Transverse colon (tissue), 4 donors: ENCODE measurements at regions of chr10 and their contacts with region 1.

Region 1: GRCh38 chr10:130110246-130111112 is at the start of gene C10orf143:
- DNase-seq: peak; percentile 98
- H3K4me3 ChIP-seq: peak within 1 kb of the TSS; percentile 67 to 77 (median 72)
- H3K27ac ChIP-seq: peak within 1 kb of the TSS; percentile 87 to 96 (median 94)
- H3K4me1 ChIP-seq: peaks cover 3 to 23% (median 18%) of the 10 kb centered on the region in 4 donors
- H3K27me3 ChIP-seq: no peaks in the 10 kb centered on the region
- CTCF ChIP-seq: no peak
- EP300 ChIP-seq: no peak
- POLR2A ChIP-seq: peak; percentile 92
- total RNA-seq, gene C10orf143: 3.8 to 4.0 TPM in 2 of 4 donors, not detected in the others

Region 2: DNA sequence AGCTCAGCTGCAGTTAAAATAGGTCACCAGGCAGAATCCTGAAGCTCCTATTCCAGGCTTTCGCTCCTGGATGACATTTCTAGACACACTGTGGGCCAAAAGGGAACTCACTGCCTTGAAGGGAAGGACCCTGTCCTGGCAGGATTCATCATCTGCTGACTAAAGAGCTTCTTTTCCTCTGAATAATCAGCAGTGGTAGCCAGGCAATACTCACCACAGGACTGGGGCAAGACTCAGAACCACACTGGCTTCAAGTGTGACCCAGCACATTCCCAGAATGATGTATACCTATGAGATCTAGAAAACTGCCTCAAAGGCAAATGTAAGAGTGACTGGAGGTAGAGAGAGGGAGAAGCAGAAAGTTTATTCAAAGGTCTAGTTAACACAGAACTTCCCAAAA is 116.9 kb before region 1 on chr10:
- in situ Hi-C with region 1: no loop called
- intact Hi-C with region 1: no loop called
- DNase-seq: no peak
- H3K4me3 ChIP-seq: no peak overlapping the region
- H3K27ac ChIP-seq: no peak overlapping the region
- H3K4me1 ChIP-seq: no peaks in the 10 kb centered on the region
- H3K27me3 ChIP-seq: no peaks in the 10 kb centered on the region
- CTCF ChIP-seq: no peak
- EP300 ChIP-seq: no peak
- POLR2A ChIP-seq: no peak

Region 3: DNA sequence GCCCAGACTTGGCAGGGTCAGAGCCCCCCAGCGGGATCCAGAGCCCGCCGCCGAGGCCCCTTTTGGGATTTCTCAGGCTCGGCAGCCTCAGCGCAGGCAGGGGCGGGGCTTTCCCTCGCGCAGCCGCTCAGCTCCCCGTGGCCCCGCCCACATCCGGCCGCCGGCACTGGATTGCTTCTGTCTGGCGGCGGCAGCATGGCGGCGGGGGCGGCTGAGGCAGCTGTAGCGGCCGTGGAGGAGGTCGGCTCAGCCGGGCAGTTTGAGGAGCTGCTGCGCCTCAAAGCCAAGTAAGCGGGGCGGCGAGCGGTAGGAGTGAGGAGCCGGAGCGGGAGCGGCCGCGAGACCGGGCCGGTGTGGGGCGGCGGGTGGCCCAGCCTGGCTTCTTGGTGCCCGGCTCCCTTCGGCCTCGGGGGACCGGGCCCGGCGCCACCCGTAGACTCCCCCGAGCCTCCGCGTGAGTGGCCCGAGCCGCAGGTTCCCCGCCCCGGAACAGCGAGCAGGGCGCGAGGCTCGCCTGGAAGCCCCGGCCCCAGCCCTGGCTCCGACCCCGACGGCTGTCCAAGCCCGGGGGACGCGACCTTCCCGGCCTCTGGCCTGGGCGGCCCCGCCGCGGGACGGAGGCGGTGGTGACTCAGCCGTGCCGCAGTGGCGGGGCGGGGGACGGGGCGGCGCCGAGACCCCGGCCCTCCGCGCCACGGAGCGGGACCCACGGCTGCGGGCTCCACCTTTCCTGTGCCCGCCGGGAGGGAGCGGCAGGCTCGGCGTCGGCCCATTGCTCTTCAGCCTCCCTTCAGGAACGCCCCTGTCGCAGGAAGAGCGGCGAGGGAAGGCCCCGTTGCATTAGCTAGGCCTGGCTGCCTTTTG is 26.0 kb after region 1 on chr10 and contains the start of gene GLRX3:
- in situ Hi-C with region 1: no loop called
- intact Hi-C with region 1: loop called (anchors 2 kb)
- DNase-seq: peak; percentile 92
- H3K4me3 ChIP-seq: peak within 1 kb of the TSS; percentile 65 to 100 (median 86)
- H3K27ac ChIP-seq: peak within 1 kb of the TSS; percentile 82 to 90 (median 87)
- H3K4me1 ChIP-seq: peaks cover 17 to 45% (median 22%) of the 10 kb centered on the region in 4 donors
- H3K27me3 ChIP-seq: no peaks in the 10 kb centered on the region
- CTCF ChIP-seq: no peak
- EP300 ChIP-seq: no peak
- POLR2A ChIP-seq: peak; percentile 73
- total RNA-seq, gene GLRX3: 32.7 to 38.2 (median 34.3) TPM